GM13976 (cell line): ENCODE measurements at regions of chr5 and their contacts with region 1.

Region 1: DNA sequence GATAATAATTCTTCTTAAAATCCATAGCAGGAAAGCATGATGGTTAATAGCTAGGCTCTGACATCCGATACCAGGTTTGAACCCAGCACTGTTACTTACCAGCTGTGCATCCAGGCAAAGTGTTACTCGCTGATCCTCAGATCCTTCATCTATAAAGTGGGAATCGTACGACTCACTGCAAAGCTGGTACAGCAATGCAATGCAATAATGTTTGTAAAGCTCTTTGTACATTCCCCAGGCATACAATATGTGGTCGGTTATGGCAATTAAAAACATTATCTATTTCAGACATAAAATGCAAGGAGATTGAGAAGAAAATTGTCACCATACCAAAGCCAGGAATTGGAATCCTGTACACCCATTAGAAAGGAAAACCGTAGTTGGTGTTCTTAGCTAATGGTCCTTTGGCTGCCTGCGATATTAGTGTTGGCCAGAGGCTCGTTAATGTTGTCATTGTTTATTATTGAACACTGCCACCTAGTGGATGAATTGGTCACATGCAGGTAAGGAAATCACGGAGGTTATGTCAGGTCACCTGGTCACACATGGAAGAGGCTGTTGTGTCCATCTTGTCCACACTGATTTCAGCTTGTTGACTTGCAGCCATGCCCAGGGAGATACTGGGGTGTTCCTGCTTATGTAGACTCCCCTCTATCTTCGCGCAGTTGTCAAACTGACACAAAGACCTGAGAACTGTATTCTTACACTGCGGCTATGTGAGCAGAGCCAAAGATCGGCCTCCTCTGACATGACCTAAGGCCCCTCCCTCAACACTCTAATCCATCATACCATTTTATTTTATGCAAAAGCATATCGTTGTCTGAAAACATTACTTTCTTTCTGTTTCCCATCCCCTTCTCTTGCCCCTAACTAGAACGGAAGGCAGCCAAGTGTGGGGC is 87.5 kb upstream of the PPP2R2B start:
- DNase-seq: peak; percentile 35
- CTCF ChIP-seq: peak; percentile 84

Region 2: DNA sequence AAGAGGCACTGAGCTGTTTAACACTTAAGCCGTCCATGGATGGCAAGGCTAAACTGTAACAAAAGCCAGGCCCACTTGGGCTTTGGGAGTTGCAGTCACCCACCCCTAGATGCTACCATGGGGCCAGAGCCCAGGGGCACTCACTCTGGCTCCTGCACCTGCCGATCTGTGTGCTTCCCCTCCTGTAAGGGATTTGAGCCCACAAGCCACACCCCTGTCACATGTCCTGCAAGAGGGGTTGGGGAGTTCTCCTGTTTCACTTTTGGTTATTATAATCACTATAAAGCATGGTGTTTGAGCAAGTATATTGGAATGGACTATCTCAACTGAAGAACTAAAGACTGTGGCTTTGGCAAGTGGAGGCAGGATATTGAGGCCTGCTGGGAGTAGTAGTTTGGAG is 436.0 kb before region 1 on chr5:
- in situ Hi-C with region 1: no loop called
- DNase-seq: peak; percentile 37
- CTCF ChIP-seq: no peak

Region 3: GRCh38 chr5:146541958-146542849 is 423.8 kb before region 1 on chr5:
- in situ Hi-C with region 1: loop called (anchors 10 kb)
- DNase-seq: peak; percentile 60
- CTCF ChIP-seq: peak; percentile 88

Region 4: GRCh38 chr5:146653560-146653959 is 312.4 kb before region 1 on chr5:
- in situ Hi-C with region 1: loop called (anchors 10 kb)
- DNase-seq: no peak
- CTCF ChIP-seq: no peak